ENCODE measurements at regions of chr17 and their contacts with region 1.

Region 1: GRCh38 chr17:2511462-2512369 is at the start of gene METTL16:
- DNase-seq: peak; percentile 99
- H3K4me3 Mint-ChIP-seq: no peak within 1 kb of the TSS
- H3K27ac Mint-ChIP-seq: no peak within 1 kb of the TSS
- H3K4me1 Mint-ChIP-seq: peaks cover 11% of the 10 kb centered on the region
- H3K27me3 Mint-ChIP-seq: no peaks in the 10 kb centered on the region
- CTCF ChIP-seq: no peak
- total RNA-seq, gene METTL16: 37.6 and 41.4 TPM in 2 replicates

Region 2: GRCh38 chr17:2111719-2112118 is 400.0 kb before region 1 on chr17:
- CTCF ChIA-PET with region 1: no interaction called
- POLR2A ChIA-PET with region 1: no interaction called
- intact Hi-C with region 1: no loop called
- DNase-seq: no peak
- H3K4me3 Mint-ChIP-seq: no peak overlapping the region
- H3K27ac Mint-ChIP-seq: no peak overlapping the region
- H3K4me1 Mint-ChIP-seq: no peaks in the 10 kb centered on the region
- H3K27me3 Mint-ChIP-seq: no peaks in the 10 kb centered on the region
- CTCF ChIP-seq: no peak

Region 3: GRCh38 chr17:2484876-2485275 is 26.8 kb before region 1 on chr17:
- CTCF ChIA-PET with region 1: interaction called, 3 read pairs
- POLR2A ChIA-PET with region 1: interaction called, 47 read pairs
- intact Hi-C with region 1: no loop called
- DNase-seq: peak; percentile 81
- H3K4me3 Mint-ChIP-seq: peak overlapping the region; percentile 65
- H3K27ac Mint-ChIP-seq: no peak overlapping the region
- H3K4me1 Mint-ChIP-seq: peaks cover 27% of the 10 kb centered on the region
- H3K27me3 Mint-ChIP-seq: no peaks in the 10 kb centered on the region
- CTCF ChIP-seq: no peak

Region 4: DNA sequence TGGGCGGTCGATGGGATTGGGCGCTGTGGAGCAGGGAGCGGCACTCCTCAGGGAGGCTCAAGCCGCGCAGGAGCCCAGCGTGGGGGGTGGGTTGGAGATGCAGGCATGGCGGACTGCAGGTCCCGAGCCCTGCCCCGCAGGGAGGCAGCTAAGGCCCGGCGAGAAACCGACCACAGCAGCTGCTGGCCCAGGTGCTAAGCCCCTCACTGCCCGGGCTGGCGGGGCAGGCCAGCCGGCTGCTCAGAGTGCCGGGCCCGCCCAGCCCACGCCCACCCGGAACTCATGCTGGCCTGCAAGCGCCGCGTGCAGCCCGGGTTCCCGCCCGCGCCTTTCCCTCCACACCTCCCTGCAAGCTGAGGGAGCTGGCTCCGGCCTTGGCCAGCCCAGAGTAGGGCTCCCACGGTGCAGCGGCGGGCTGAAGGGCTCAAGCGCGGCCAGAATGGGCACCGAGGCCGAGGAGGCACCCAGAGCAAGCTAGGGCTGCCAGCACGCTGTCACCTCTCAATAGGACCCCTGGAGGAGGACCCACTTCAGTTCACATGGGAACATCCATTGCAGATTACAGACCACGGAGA is 20.5 kb after region 1 on chr17:
- CTCF ChIA-PET with region 1: no interaction called
- POLR2A ChIA-PET with region 1: interaction called, 10 read pairs
- intact Hi-C with region 1: no loop called
- DNase-seq: no peak
- H3K4me3 Mint-ChIP-seq: no peak overlapping the region
- H3K27ac Mint-ChIP-seq: no peak overlapping the region
- H3K4me1 Mint-ChIP-seq: no peaks in the 10 kb centered on the region
- H3K27me3 Mint-ChIP-seq: no peaks in the 10 kb centered on the region
- CTCF ChIP-seq: no peak

Region 5: GRCh38 chr17:2564878-2565277 is 53.2 kb after region 1 on chr17:
- CTCF ChIA-PET with region 1: no interaction called
- POLR2A ChIA-PET with region 1: interaction called, 34 read pairs
- intact Hi-C with region 1: no loop called
- DNase-seq: peak; percentile 68
- H3K4me3 Mint-ChIP-seq: peak overlapping the region; percentile 33
- H3K27ac Mint-ChIP-seq: peak overlapping the region; percentile 95
- H3K4me1 Mint-ChIP-seq: peaks cover 18% of the 10 kb centered on the region
- H3K27me3 Mint-ChIP-seq: no peaks in the 10 kb centered on the region
- CTCF ChIP-seq: no peak

Region 6: DNA sequence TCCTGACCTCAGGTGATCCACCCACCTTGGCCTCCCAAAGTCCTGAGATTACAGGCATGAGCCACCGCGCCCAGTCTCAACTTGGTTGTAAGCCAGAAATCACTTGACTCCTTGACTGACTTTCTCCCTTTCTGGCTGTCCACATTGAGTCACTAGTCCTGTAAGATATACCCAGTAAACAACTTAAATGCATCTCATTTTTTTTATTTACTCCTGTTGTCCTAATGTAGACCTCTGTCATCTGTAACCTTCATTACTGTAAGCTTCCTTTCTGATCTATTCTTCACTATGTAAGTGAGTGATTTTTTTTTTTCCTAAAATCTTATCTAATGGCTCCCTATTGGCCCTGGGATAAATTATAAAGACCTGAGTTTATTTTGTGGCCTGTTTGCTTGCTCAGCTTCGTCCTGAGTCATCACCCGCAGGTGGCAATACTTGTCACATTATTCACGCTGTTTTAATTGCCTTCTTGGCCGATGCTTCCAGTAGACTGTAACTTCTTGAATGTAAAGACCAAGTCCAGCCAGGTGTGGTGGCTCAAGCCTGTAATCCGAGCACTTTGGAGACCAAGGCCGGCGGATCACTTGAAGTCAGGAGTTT is 122.7 kb after region 1 on chr17:
- CTCF ChIA-PET with region 1: interaction called, 3 read pairs
- POLR2A ChIA-PET with region 1: interaction called, 11 read pairs
- intact Hi-C with region 1: no loop called
- DNase-seq: peak; percentile 87
- H3K4me3 Mint-ChIP-seq: peak overlapping the region; percentile 5
- H3K27ac Mint-ChIP-seq: peak overlapping the region; percentile 74
- H3K4me1 Mint-ChIP-seq: peaks cover 47% of the 10 kb centered on the region
- H3K27me3 Mint-ChIP-seq: no peaks in the 10 kb centered on the region
- CTCF ChIP-seq: no peak

Measured in MCF 10A (cell line).